ENCODE measurements at regions of chr5 and their contacts with region 1.

Region 1: DNA sequence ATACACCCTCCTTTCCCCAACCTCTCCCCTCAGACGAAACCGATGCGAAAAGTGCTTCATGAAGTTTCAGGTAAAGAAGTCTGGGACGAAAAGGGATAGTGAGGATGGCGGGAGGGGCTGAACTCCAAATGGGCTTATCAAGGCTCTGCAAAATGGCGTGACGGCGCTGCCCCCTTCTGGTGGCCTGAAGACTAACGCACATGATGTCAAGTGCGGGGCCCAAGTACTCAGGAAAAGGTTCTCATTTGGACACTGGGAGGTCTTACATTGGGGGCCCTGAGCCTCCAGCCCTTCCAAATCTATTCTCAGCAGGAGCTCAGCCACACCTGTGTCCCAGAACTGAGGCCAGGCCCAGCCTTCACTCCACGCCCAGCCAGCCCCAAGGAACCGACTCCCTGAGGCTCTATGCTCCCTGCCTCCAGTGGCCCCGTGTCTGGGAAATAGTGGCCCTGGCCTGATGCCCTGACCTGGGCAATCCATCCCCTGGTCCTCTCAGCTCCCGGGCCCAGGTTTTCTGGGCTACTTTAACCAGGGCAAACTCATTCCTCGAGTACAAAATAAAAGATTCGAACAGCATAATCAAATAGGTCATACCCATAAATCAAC is 119.9 kb downstream of the KCNIP1 start:
- DNase-seq: peak; percentile 84

Region 2: DNA sequence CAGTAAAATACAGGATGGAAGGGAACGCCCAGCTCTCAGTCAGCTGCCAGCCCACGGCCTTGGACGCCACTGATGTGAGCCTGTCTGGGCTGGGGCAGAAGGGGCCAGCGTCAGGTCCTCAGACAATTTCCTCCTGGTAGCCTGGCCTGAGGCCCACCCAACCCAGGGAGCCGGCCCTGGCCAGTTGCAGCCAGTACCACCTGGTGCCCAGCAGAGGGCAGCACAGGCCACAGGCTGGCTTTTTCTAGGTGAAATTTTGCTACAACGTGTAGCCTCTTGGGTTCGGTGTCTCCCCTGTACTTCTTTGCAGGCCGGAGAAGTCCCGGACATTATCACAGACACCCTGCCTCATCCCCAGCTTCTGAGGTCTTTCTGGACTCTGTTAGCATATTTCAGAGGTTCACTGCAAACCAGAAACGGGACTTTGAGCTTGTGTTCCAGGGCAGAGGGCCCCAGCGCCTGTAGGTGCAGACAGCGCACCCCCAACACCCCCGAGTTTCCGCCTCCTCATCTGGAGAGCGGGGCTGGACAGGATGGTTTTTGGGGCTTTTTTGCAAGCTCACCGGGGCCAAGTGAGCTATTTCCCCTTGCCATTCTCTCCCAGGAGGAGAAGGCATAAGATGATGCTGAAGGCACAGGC is 188.6 kb before region 1 on chr5:
- intact Hi-C with region 1: loop called (anchors 2 to 10 kb)
- DNase-seq: peak; percentile 89

Region 3: DNA sequence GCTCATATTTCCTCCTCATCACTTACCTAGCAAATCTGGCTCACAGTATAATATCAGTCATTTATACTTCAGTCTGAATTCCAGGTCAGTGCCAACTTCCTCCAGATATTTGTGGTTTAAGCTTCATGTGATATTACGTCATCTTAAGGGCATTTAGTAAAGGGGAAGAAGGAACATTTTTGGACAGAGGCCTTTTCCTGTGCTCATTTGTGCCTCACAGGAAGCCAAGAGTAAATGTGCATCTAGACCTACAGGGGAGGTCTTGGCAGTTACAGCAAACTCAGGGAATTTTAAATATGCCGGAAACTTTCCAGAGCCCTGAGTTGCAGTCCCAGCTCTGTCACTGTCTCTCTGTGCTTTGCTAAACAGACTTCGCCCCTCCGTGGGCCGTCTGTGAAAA is 132.2 kb before region 1 on chr5:
- intact Hi-C with region 1: no loop called
- DNase-seq: no peak

Region 4: GRCh38 chr5:170691657-170692056 is 68.0 kb after region 1 on chr5:
- intact Hi-C with region 1: no loop called
- DNase-seq: no peak

Region 5: GRCh38 chr5:171961117-171961516 is 1337.4 kb after region 1 on chr5:
- intact Hi-C with region 1: loop called in 1 of 2 experiments (anchors 5 kb)
- DNase-seq: no peak

Measured in posterior vena cava (tissue), 2 donors.